GM12878 (cell line): ENCODE measurements at regions of chr16 and their contacts with region 1.

Region 1: GRCh38 chr16:60013076-60013475 is 1279.0 kb upstream of the GOT2 start:
- DNase-seq: no peak
- ATAC-seq: no peak
- H3K4me3 ChIP-seq: no peak overlapping the region
- H3K27ac ChIP-seq: no peak overlapping the region
- H3K4me1 ChIP-seq: no peaks in the 10 kb centered on the region
- H3K27me3 ChIP-seq: no peaks in the 10 kb centered on the region
- CTCF ChIP-seq: no peak
- EP300 ChIP-seq: no peak
- POLR2A ChIP-seq: no peak
- RAD21 ChIP-seq: no peak

Region 2: GRCh38 chr16:60077861-60078260 is 64.8 kb after region 1 on chr16:
- CTCF ChIA-PET with region 1: no interaction called
- POLR2A ChIA-PET with region 1: no interaction called
- RAD21 ChIA-PET with region 1: no interaction called
- SMC1A ChIA-PET with region 1: no interaction called
- in situ Hi-C with region 1: loop called (anchors 10 kb)
- intact Hi-C with region 1: no loop called
- DNase-seq: no peak
- ATAC-seq: no peak
- H3K4me3 ChIP-seq: no peak overlapping the region
- H3K27ac ChIP-seq: no peak overlapping the region
- H3K4me1 ChIP-seq: no peaks in the 10 kb centered on the region
- H3K27me3 ChIP-seq: no peaks in the 10 kb centered on the region
- CTCF ChIP-seq: no peak
- EP300 ChIP-seq: no peak
- POLR2A ChIP-seq: no peak
- RAD21 ChIP-seq: no peak